CD4-positive, alpha-beta T cell (primary cell): ENCODE measurements at regions of chr4 and their contacts with region 1.

Region 1: GRCh38 chr4:99894161-99894997 is at the start of gene LAMTOR3:
- DNase-seq: peak; percentile 76 to 97 (median 88)
- ATAC-seq: peak; percentile 98
- H3K4me3 ChIP-seq: peak within 1 kb of the TSS; percentile 61
- H3K4me3 Mint-ChIP-seq: peak within 1 kb of the TSS; percentile 99
- H3K27ac ChIP-seq: peak within 1 kb of the TSS; percentile 71 to 80
- H3K27ac Mint-ChIP-seq: peak within 1 kb of the TSS; percentile 96
- H3K4me1 ChIP-seq: peaks cover 23% of the 10 kb centered on the region
- H3K4me1 Mint-ChIP-seq: peaks cover 53% of the 10 kb centered on the region
- H3K27me3 ChIP-seq: no peaks in the 10 kb centered on the region
- H3K27me3 Mint-ChIP-seq: no peaks in the 10 kb centered on the region
- CTCF ChIP-seq: no peak
- total RNA-seq, gene LAMTOR3: 32.0 to 32.8 TPM

Region 2: DNA sequence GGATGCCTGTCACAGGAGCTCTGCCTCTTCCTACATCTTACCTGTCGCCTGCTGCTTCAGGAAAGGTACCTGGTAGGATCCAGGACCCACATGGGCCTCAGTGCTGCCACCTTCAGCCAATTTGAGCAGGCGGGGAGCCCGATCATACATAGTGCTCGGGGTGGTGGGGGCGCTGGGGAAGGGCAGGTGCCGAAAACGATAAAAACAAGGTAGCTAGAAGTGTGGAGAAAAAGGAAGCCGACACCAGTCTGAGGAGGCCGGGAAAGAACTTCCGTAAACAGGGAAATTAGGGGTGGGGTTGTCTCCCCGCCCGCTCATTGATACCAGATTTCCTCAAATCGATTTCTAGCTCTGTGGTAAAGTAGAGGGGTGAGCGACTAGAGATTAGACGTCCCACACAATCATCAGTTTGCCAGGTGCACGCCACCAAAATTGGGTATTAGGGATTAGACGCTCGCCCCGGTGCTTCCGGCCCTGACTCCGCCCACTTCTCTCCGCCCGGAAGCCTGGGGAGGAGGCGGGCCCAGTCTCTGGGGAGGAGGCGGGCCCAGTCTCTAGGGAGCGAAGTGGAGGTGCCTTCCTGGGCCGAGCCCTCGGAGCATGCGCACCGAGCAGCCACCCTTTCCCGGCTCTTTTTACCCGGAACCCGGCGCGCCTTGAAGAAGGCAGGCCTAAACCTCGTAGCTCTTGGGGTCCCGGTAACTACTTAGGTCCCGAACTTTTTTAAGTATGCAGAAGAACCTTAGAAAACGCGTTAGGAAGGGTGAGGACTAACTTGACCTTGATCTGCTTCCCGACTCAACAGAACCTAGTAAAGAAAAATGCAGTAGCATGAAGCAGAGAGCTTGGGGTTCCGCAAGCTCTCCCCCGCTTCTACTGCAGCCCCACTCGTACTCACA is 1751.1 kb before region 1 on chr4 and contains the start of gene STPG2:
- CTCF ChIA-PET with region 1: no interaction called
- POLR2A ChIA-PET with region 1: no interaction called
- intact Hi-C with region 1: loop called in 1 of 2 experiments (anchors 10 kb)
- DNase-seq: peak; percentile 85 to 97 (median 94)
- ATAC-seq: peak; percentile 98
- H3K4me3 ChIP-seq: peak within 1 kb of the TSS; percentile 88
- H3K4me3 Mint-ChIP-seq: peak within 1 kb of the TSS; percentile 90
- H3K27ac ChIP-seq: peak within 1 kb of the TSS; percentile 75 to 96
- H3K27ac Mint-ChIP-seq: peak within 1 kb of the TSS; percentile 93
- H3K4me1 ChIP-seq: peaks cover 17% of the 10 kb centered on the region
- H3K4me1 Mint-ChIP-seq: peaks cover 21% of the 10 kb centered on the region
- H3K27me3 ChIP-seq: no peaks in the 10 kb centered on the region
- H3K27me3 Mint-ChIP-seq: no peaks in the 10 kb centered on the region
- CTCF ChIP-seq: peak; percentile 73
- total RNA-seq, gene STPG2: 0.22 to 0.28 TPM

Region 3: DNA sequence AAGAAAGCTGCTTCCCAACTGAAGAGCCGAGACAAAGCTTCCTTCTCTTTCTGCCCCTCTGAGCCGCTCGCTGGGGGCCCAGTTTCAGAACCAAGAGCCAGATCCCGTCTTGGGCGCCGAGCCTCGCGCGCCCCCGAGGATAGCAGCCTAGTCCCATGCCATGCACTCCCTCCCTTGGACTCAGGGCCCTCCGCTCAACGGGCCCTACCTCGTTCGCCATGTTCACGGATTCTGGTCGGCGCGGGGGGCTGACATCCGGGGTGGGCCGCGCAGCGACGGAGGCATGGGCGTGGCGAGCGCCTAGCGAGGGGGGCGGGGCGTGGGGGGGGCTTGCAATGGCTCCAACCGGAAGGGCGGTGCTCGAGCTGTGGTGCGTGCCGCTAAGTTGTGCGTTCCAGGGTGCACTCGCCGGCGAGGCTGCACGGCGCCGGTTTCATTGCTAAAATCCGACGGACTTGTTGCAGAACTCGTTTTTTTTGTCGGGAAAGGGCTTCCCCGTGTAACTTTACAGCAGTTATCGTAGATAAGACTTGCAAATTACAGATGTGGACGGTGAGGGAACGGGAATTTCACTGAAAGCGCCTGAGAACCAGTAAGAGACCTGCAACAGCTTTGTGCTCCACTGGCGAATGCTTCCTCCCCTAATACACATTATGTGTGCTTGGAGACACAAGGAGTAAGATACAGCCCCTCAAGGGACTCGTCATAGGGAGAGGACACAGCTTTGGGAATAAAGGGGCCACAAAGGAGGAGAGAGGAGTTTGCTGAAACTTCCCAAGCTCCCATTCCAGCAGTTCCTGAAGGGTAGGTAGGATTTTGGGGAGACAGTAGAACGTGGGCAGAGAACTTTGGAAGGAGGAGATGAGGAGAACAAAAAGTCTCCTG is 805.7 kb before region 1 on chr4 and contains the start of gene ADH5:
- CTCF ChIA-PET with region 1: no interaction called
- POLR2A ChIA-PET with region 1: interaction called, 13 read pairs
- intact Hi-C with region 1: loop called in 1 of 2 experiments (anchors 5 kb)
- DNase-seq: peak; percentile 86 to 96 (median 91)
- ATAC-seq: peak; percentile 95
- H3K4me3 ChIP-seq: peak within 1 kb of the TSS; percentile 93
- H3K4me3 Mint-ChIP-seq: peak within 1 kb of the TSS; percentile 95
- H3K27ac ChIP-seq: peak within 1 kb of the TSS; percentile 76 to 82
- H3K27ac Mint-ChIP-seq: peak within 1 kb of the TSS; percentile 93
- H3K4me1 ChIP-seq: peaks cover 25% of the 10 kb centered on the region
- H3K4me1 Mint-ChIP-seq: peaks cover 65% of the 10 kb centered on the region
- H3K27me3 ChIP-seq: no peaks in the 10 kb centered on the region
- H3K27me3 Mint-ChIP-seq: no peaks in the 10 kb centered on the region
- CTCF ChIP-seq: no peak
- total RNA-seq, gene ADH5: 49.1 to 52.0 TPM

Region 4: GRCh38 chr4:99816545-99817308 is 77.7 kb before region 1 on chr4 and contains the start of gene DAPP1:
- CTCF ChIA-PET with region 1: interaction called, 3 read pairs
- POLR2A ChIA-PET with region 1: interaction called, 18 read pairs
- intact Hi-C with region 1: loop called in 1 of 2 experiments (anchors 2 kb)
- DNase-seq: peak; percentile 60 to 92 (median 72)
- ATAC-seq: peak; percentile 97
- H3K4me3 ChIP-seq: peak within 1 kb of the TSS; percentile 72
- H3K4me3 Mint-ChIP-seq: peak within 1 kb of the TSS; percentile 92
- H3K27ac ChIP-seq: peak within 1 kb of the TSS; percentile 64 to 66
- H3K27ac Mint-ChIP-seq: peak within 1 kb of the TSS; percentile 91
- H3K4me1 ChIP-seq: peaks cover 30% of the 10 kb centered on the region
- H3K4me1 Mint-ChIP-seq: peaks cover 64% of the 10 kb centered on the region
- H3K27me3 ChIP-seq: no peaks in the 10 kb centered on the region
- H3K27me3 Mint-ChIP-seq: no peaks in the 10 kb centered on the region
- CTCF ChIP-seq: no peak
- total RNA-seq, gene DAPP1: 8.3 to 9.1 TPM

Region 5: DNA sequence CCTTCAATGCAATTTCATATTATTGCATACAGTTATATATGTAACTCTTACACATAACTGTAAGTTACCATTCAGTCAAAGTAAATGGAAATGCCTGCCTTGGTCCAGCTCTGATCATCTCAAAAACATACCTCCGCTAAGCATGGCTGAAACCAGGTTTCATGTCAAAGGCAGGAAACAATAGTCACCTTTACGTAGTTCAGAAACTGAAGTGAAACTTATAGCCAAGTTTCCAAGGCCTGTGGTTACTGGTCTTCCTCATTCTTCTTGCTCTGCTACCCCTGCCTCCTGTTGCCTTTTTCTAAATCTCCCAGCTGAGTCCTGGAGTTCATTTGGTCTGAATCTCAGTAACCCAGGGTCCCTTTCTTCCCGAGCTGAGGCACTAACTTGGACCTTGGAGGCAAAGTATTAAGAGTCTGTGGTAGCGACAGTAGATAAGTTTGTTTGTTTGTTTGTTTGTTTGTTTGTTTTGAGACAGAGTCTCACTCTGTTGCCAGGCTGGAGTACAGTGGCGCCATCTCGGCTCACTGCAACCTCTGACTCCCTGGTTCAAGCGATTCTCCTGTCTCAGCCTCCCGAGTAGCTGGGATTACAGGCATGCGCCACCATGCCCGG is 46.9 kb before region 1 on chr4:
- CTCF ChIA-PET with region 1: no interaction called
- POLR2A ChIA-PET with region 1: interaction called, 10 read pairs
- intact Hi-C with region 1: loop called in 1 of 2 experiments (anchors 5 kb)
- DNase-seq: peak in 5 of 14 experiments; percentile 6 to 63 (median 57)
- ATAC-seq: peak; percentile 37
- H3K4me3 ChIP-seq: peak overlapping the region; percentile 15
- H3K4me3 Mint-ChIP-seq: peak overlapping the region; percentile 53
- H3K27ac ChIP-seq: peak overlapping the region in 1 of 2 donors; percentile 68
- H3K27ac Mint-ChIP-seq: peak overlapping the region; percentile 86
- H3K4me1 ChIP-seq: peaks cover 35% of the 10 kb centered on the region
- H3K4me1 Mint-ChIP-seq: peaks cover 59% of the 10 kb centered on the region
- H3K27me3 ChIP-seq: no peaks in the 10 kb centered on the region
- H3K27me3 Mint-ChIP-seq: no peaks in the 10 kb centered on the region
- CTCF ChIP-seq: no peak

Region 6: DNA sequence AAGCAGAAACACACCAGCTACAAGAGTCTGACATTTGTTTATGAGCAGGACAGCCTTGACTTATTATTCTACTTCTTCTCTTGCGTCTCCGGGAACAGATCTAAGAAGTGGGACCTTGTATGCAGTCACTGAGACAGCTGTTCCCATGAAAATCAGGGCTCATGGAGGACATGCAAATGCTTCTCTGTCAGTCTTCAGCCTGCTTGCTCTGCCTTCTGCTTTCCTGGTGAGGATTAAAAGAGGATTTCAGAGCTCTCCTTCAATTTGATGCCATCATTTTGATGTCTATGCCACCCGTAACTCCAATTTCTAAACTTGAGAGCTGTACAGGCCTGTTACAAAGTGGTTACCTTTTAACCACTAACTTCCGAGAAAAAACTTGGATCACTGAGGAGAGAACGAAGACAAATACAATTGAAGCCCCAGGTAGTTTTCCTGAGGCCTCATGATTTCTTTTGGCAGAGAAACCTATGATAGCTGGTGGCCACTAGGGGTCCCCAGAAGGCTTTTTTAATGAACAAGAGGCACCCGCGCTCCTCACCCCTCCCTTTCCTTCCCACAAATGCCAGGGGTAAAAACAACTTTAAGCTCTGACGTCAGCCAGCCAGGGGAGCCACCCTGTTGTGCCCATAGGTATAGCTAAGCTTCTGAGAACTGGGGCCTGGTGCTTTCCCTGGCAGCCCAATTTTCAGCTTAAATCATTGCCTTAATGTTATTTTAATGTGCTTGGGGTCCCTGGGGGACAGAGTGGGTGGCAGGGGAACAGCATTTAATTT is 198.9 kb after region 1 on chr4:
- CTCF ChIA-PET with region 1: no interaction called
- POLR2A ChIA-PET with region 1: no interaction called
- intact Hi-C with region 1: loop called in 1 of 2 experiments (anchors 10 kb)
- DNase-seq: peak; percentile 70 to 96 (median 81)
- ATAC-seq: peak; percentile 99
- H3K4me3 ChIP-seq: no peak overlapping the region
- H3K4me3 Mint-ChIP-seq: no peak overlapping the region
- H3K27ac ChIP-seq: no peak overlapping the region
- H3K27ac Mint-ChIP-seq: peak overlapping the region; percentile 92
- H3K4me1 ChIP-seq: peaks cover 7% of the 10 kb centered on the region
- H3K4me1 Mint-ChIP-seq: peaks cover 30% of the 10 kb centered on the region
- H3K27me3 ChIP-seq: no peaks in the 10 kb centered on the region
- H3K27me3 Mint-ChIP-seq: no peaks in the 10 kb centered on the region
- CTCF ChIP-seq: peak; percentile 78